ENCODE measurements at regions of chr1 and their contacts with region 1.

Region 1: GRCh38 chr1:211680752-211681327 is 5.4 kb upstream of the NEK2 start:
- DNase-seq: peak; percentile 85
- ATAC-seq: peak; percentile 88
- H3K4me3 ChIP-seq: no peak overlapping the region
- H3K27ac ChIP-seq: no peak overlapping the region
- H3K4me1 ChIP-seq: peaks cover 0 to 13% of the 10 kb centered on the region in 2 experiments; a peak in 3 of 4 replicates
- H3K27me3 ChIP-seq: no peaks in the 10 kb centered on the region
- CTCF ChIP-seq: peak; percentile 64 to 94 (median 75)
- POLR2A ChIP-seq: no peak
- RAD21 ChIP-seq: peak; percentile 97

Region 2: GRCh38 chr1:212315907-212316306 is 635.1 kb after region 1 on chr1:
- CTCF ChIA-PET with region 1: interaction called, 3 read pairs
- POLR2A ChIA-PET with region 1: no interaction called
- RAD21 ChIA-PET with region 1: no interaction called
- intact Hi-C with region 1: loop called (anchors 10 kb)
- DNase-seq: peak; percentile 21
- ATAC-seq: peak; percentile 87
- H3K4me3 ChIP-seq: no peak overlapping the region
- H3K27ac ChIP-seq: no peak overlapping the region
- H3K4me1 ChIP-seq: peaks cover 2 to 9% of the 10 kb centered on the region in 2 experiments; a peak in 3 of 4 replicates
- H3K27me3 ChIP-seq: no peaks in the 10 kb centered on the region
- CTCF ChIP-seq: peak; percentile 32 to 50 (median 45); a peak in 4 of 6 replicates
- POLR2A ChIP-seq: no peak
- RAD21 ChIP-seq: peak; percentile 69

Region 3: DNA sequence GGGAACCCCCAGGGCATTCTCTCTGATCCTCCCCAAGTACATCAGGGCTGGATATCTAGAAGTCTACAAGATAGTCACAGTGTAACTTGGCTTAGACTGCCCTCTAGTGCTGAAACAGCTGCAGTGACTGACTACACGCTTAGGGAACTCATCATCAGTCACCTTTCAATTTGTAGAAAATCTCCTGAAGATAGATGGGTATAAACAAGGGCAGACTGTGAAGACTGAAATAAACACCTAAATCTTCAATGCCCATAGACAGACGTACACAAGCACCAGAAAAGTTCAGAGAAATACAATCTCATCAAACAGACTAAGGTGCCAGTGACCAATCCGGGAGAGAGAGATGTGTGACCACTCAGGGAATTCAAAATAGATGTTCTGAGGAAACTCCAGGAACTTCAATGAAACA is 687.2 kb after region 1 on chr1:
- CTCF ChIA-PET with region 1: interaction called, 8 read pairs
- POLR2A ChIA-PET with region 1: no interaction called
- RAD21 ChIA-PET with region 1: no interaction called
- intact Hi-C with region 1: loop called (anchors 5 kb)
- DNase-seq: peak; percentile 66
- ATAC-seq: peak; percentile 98
- H3K4me3 ChIP-seq: no peak overlapping the region
- H3K27ac ChIP-seq: no peak overlapping the region
- H3K4me1 ChIP-seq: no peaks in the 10 kb centered on the region
- H3K27me3 ChIP-seq: no peaks in the 10 kb centered on the region
- CTCF ChIP-seq: peak; percentile 76 to 96 (median 92); a peak in 5 of 6 replicates
- POLR2A ChIP-seq: no peak
- RAD21 ChIP-seq: peak; percentile 92

Measured in HCT116 (cell line).